ENCODE measurements at regions of chr7 and their contacts with region 1.

Region 1: GRCh38 chr7:36723951-36724664 is at the start of gene AOAH:
- DNase-seq: peak; percentile 83
- H3K4me3 Mint-ChIP-seq: peak within 1 kb of the TSS; percentile 94
- H3K27ac Mint-ChIP-seq: peak within 1 kb of the TSS; percentile 96
- H3K4me1 Mint-ChIP-seq: peaks cover 71% of the 10 kb centered on the region
- H3K27me3 Mint-ChIP-seq: no peaks in the 10 kb centered on the region
- total RNA-seq, gene AOAH: 33.4 and 33.5 TPM in 2 replicates

Region 2: DNA sequence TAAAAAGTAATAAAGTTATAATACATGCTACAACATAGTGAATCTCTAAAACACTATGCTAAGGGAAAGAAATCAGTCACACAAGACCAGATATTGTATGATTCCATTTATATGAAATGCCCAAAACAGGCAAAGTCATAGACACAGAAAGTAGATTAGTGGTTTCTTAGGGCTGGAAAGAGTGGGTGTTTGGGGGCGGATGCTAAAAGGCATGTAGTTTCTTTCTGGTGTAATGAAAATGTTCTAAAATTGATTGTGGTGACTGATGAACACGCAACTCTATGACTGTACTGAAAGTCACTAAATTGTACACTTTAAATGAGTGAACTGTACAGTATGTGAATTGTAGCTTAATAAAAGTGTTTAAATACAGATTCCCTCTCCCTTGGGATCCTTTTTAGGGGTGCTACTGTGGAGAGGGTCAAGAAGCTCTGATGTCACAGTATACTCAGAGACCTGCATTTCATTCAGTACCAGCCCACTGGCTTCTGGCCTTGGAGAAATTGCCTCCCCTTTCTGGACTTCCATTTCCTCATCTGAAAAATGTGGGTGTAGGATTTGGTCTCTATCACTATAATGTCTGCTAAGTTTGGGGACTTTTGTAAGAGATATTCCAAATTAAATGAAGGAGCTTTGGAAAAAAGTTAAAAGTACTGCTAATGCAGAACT is 46.2 kb before region 1 on chr7:
- intact Hi-C with region 1: loop called (anchors 1 kb)
- DNase-seq: peak; percentile 37
- H3K4me3 Mint-ChIP-seq: peak overlapping the region; percentile 64
- H3K27ac Mint-ChIP-seq: peak overlapping the region; percentile 87
- H3K4me1 Mint-ChIP-seq: peaks cover 65% of the 10 kb centered on the region
- H3K27me3 Mint-ChIP-seq: no peaks in the 10 kb centered on the region

Region 3: DNA sequence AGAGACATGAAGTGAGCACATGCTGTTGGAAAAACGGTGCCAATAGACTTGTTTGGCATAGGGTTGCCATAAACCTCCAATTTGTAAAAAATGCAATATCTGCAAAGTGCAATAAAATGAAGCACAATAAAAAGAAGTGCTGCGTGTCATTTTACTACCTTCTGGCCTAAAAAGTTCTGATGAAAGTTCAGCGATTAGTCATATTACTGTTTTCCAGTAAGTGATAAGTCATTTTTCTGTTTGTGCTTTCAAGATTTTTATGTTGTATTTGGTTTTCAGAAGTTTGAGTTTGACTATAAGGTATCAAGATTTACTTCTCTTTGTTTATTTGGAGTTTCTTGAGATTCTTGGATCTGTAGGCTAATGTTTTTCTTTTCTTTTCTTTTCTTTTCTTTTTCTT is 16.6 kb before region 1 on chr7:
- intact Hi-C with region 1: loop called (anchors 2 kb)
- DNase-seq: no peak
- H3K4me3 Mint-ChIP-seq: peak overlapping the region; percentile 30
- H3K27ac Mint-ChIP-seq: peak overlapping the region; percentile 97
- H3K4me1 Mint-ChIP-seq: peaks cover 90% of the 10 kb centered on the region
- H3K27me3 Mint-ChIP-seq: no peaks in the 10 kb centered on the region

Region 4: GRCh38 chr7:36777062-36777461 is 53.0 kb after region 1 on chr7:
- intact Hi-C with region 1: loop called (anchors 2 kb)
- DNase-seq: peak; percentile 32
- H3K4me3 Mint-ChIP-seq: peak overlapping the region; percentile 64
- H3K27ac Mint-ChIP-seq: peak overlapping the region; percentile 74
- H3K4me1 Mint-ChIP-seq: peaks cover 66% of the 10 kb centered on the region
- H3K27me3 Mint-ChIP-seq: no peaks in the 10 kb centered on the region

Region 5: GRCh38 chr7:36871863-36872262 is 147.8 kb after region 1 on chr7:
- intact Hi-C with region 1: loop called (anchors 5 kb)
- DNase-seq: no peak
- H3K4me3 Mint-ChIP-seq: no peak overlapping the region
- H3K27ac Mint-ChIP-seq: peak overlapping the region; percentile 89
- H3K4me1 Mint-ChIP-seq: peaks cover 25% of the 10 kb centered on the region
- H3K27me3 Mint-ChIP-seq: no peaks in the 10 kb centered on the region

Region 6: DNA sequence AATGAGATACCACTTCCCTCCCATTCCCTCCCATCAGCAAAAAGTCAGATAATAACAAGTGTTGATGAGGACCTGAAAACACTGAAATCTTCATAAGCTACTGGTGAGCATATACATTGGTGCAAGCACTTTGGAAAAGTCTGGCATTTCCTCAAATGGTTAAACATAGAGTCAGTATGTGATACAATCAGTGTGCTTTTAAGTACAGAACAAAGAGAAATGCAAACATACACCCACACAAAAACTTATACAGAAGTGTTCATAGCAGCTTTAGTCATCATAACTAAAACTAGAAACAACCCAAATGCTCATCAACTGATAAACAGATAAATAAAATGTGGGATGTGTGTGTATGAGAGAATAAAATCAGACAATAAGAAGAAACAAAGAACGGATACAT is 462.6 kb after region 1 on chr7:
- intact Hi-C with region 1: loop called (anchors 5 kb)
- DNase-seq: no peak
- H3K4me3 Mint-ChIP-seq: no peak overlapping the region
- H3K27ac Mint-ChIP-seq: peak overlapping the region; percentile 19
- H3K4me1 Mint-ChIP-seq: peaks cover 11% of the 10 kb centered on the region
- H3K27me3 Mint-ChIP-seq: no peaks in the 10 kb centered on the region

Region 7: DNA sequence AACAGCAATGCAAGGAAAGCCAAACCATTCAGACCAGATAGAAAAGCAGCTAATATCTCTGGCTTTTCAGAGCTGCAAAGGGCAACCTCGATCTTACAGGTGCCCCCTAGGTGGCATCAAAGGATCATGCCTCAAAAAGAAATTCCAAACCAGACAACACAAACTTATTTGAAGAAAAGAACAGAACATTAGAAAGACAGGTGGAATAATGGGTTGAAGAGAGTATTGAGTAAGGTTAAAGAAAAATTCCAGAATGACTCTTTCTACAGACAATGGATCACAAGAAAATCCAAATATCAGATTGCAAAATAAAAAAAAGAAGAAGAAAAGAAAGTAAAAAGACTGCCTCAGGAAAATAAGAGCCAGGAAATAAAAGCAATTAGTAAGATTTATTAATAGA is 510.8 kb after region 1 on chr7:
- intact Hi-C with region 1: no loop called
- DNase-seq: no peak
- H3K4me3 Mint-ChIP-seq: no peak overlapping the region
- H3K27ac Mint-ChIP-seq: no peak overlapping the region
- H3K4me1 Mint-ChIP-seq: peaks cover 14% of the 10 kb centered on the region
- H3K27me3 Mint-ChIP-seq: no peaks in the 10 kb centered on the region

Region 8: DNA sequence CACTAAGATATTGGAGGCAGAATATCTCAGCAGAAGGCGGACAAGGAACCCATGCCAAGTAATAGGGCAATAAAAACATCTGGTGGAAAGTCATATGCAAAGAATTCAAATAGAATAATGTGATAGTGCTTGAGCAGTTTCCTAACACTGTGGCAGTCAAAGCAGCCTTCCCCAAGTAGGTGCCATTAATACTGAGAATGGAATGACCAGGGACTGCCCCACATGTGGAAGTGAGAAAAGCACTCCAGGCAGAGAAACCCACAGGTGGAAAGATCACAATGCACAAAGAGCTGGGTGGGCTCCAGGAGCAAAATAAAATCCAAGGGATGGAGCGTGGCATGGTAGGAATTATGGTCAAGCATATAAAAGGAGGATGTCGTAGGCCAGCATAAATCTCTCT is 1059.9 kb after region 1 on chr7:
- intact Hi-C with region 1: no loop called
- DNase-seq: no peak
- H3K4me3 Mint-ChIP-seq: no peak overlapping the region
- H3K27ac Mint-ChIP-seq: no peak overlapping the region
- H3K4me1 Mint-ChIP-seq: no peaks in the 10 kb centered on the region
- H3K27me3 Mint-ChIP-seq: peaks cover 8% of the 10 kb centered on the region